Sigmoid colon (tissue), 7 donors: ENCODE measurements at regions of chr19 and their contacts with region 1.

Region 1: DNA sequence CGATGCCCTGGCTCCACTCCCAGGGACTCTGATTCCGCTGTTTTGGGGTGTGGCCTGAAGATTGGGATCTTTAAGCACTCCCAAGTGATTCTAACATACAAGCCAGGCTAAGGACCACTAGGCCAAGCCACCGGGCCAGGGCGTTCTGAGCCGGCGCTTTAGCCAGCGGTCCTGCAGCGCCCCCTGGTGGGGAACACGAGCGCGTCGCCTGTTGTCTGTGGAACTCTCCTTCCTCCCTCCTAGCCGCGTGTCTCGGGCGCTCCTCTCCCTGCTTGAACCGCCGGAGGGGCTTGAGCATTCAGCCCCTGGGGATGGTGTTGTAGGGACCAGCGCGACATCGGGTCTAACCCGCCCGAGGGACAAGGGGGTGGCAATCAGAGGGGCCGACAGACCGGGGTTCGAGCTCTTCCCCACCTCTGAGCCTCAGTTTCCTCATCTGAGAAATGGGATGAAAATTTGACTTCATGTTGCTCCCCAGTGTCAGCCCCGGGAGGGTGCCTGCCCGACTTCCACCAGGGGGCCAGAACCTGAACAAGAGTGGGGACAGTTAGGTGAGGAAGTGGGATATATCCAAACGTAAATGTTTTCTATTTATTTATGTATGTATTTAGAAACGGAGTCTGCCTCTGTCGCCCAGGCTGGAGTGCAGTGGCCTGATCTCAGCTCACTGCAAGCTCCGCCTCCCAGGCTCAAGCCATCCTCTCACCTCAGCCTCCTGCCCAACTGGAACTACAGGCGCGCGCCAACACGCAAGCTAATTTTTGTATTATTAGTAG is 18.0 kb upstream of the PNMA8B start:
- DNase-seq: peak; percentile 88
- H3K4me3 ChIP-seq: no peak overlapping the region
- H3K27ac ChIP-seq: no peak overlapping the region
- H3K4me1 ChIP-seq: peaks cover 0 to 7% (median 2%) of the 10 kb centered on the region in 4 donors
- H3K27me3 ChIP-seq: peaks cover 0 to 19% (median 0%) of the 10 kb centered on the region in 3 donors
- CTCF ChIP-seq: peak; percentile 78 to 91 (median 80)
- EP300 ChIP-seq: no peak
- POLR2A ChIP-seq: no peak

Region 2: DNA sequence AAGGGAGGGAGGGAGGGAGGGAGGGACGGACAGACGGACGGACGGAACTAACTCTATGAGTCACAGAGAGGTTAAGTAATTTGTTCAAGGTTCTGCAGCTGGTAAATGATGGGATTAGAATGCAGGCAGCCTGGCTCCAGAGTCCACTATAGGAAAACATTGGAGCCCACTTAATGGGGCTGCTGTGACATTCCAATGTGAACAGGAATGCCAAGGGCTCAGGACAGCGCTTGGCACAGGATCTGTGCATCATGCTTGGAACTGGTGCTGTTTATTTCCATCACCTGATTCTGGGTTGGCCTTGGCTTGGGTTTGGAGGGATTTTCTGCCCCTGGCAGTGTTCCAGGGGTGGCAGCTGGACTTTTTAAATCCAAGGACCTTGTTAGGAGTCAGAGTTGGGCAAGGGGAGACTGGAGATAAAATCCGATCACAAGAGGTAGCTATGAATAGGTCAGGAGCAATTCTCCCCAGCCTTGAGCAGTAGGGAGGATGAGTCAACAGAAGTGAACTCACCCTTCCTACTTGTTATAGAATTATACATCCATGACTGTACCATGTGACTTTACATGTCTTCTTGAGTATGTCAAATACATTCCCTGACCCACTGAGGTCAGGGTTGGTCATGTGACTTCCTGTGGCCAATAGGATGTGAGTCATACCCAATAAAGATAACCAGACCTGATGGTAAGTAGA is 224.6 kb before region 1 on chr19:
- intact Hi-C with region 1: loop called (anchors 10 kb)
- DNase-seq: peak; percentile 78
- H3K4me3 ChIP-seq: no peak overlapping the region
- H3K27ac ChIP-seq: peak overlapping the region; percentile 36 to 78 (median 74)
- H3K4me1 ChIP-seq: peaks cover 0 to 10% (median 9%) of the 10 kb centered on the region in 4 donors
- H3K27me3 ChIP-seq: no peaks in the 10 kb centered on the region
- CTCF ChIP-seq: no peak
- EP300 ChIP-seq: peak in 1 of 4 donors; percentile 37
- POLR2A ChIP-seq: no peak

Region 3: DNA sequence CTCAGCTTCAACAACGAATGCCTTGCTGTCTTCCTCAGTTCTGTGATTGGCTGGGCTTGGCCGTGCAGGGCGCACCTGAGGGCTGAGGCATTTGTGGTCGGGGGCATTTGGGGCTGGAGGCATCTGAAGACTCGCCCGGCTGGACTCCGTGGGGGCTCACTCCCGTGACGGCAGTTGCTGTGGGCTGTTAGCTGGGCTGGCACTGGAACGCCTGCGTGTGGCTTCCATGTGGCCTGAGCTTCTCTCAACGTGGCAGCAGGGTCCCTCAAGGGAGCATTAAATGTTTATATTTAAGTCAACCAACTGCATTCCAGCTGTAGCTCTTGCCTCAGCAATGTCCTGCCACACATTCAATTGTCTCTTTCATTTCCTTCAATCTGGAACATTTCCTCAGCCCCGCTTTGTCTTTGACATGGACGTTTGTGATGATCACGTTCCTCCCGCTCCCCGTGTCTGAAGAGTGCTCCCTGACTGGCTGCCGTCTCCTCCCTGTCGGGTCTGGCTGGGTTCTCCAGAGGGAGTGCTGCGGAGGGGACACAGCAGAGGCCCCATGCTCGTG is 121.3 kb before region 1 on chr19:
- intact Hi-C with region 1: loop called (anchors 1 kb)
- DNase-seq: peak; percentile 62
- H3K4me3 ChIP-seq: no peak overlapping the region
- H3K27ac ChIP-seq: peak overlapping the region in 1 of 4 donors; percentile 31
- H3K4me1 ChIP-seq: peaks cover 0 to 6% (median 0%) of the 10 kb centered on the region in 4 donors
- H3K27me3 ChIP-seq: no peaks in the 10 kb centered on the region
- CTCF ChIP-seq: no peak
- EP300 ChIP-seq: no peak
- POLR2A ChIP-seq: no peak

Region 4: GRCh38 chr19:46542428-46543230 is 29.0 kb after region 1 on chr19:
- intact Hi-C with region 1: no loop called
- DNase-seq: peak; percentile 96
- H3K4me3 ChIP-seq: no peak overlapping the region
- H3K27ac ChIP-seq: no peak overlapping the region
- H3K4me1 ChIP-seq: peaks cover 0 to 8% (median 0%) of the 10 kb centered on the region in 4 donors
- H3K27me3 ChIP-seq: no peaks in the 10 kb centered on the region
- CTCF ChIP-seq: peak; percentile 72 to 91 (median 88)
- EP300 ChIP-seq: no peak
- POLR2A ChIP-seq: no peak